Right cardiac atrium (tissue), 5 donors: ENCODE measurements at regions of chr4 and their contacts with region 1.

Region 1: GRCh38 chr4:119041951-119042560 is 93.6 kb upstream of the MYOZ2 start:
- DNase-seq: peak in 1 of 3 donors; percentile 34
- ATAC-seq: peak; percentile 72 to 77
- H3K4me3 ChIP-seq: no peak overlapping the region
- H3K27ac ChIP-seq: no peak overlapping the region
- H3K4me1 ChIP-seq: peaks cover 6% of the 10 kb centered on the region
- H3K27me3 ChIP-seq: no peaks in the 10 kb centered on the region

Region 2: DNA sequence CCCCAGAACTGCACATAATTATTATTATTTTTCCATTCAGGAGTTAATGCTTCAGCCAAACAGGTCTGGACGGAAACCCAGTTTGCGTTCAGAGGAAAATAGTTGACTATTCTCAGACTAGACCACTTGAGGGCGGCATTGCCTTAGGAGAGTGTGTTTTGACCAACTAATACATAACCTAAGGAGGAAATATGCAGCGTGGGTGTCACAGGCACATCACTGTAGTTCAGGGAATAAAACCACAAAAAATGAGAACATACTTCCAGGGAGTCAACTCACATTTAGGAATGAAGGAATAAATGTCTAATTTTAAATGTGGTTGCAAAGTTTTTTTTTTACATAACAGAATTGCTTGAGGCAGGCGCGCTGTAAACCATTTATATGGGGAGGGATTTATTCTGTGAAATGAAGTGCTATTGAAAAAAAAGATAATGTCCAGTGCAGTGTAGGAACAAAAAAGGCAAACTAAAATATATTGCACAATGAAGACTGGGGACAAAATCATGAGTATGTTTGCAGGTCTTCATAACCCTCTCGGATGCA is 60.1 kb before region 1 on chr4:
- intact Hi-C with region 1: no loop called
- DNase-seq: peak in 2 of 3 donors; percentile 41 to 55
- ATAC-seq: peak; percentile 74 to 83
- H3K4me3 ChIP-seq: no peak overlapping the region
- H3K27ac ChIP-seq: no peak overlapping the region
- H3K4me1 ChIP-seq: peaks cover 14% of the 10 kb centered on the region
- H3K27me3 ChIP-seq: no peaks in the 10 kb centered on the region

Region 3: GRCh38 chr4:119025916-119026661 is 16.0 kb before region 1 on chr4:
- intact Hi-C with region 1: no loop called
- DNase-seq: no peak
- ATAC-seq: peak; percentile 82 to 87
- H3K4me3 ChIP-seq: no peak overlapping the region
- H3K27ac ChIP-seq: peak overlapping the region; percentile 93
- H3K4me1 ChIP-seq: peaks cover 5% of the 10 kb centered on the region
- H3K27me3 ChIP-seq: no peaks in the 10 kb centered on the region

Region 4: DNA sequence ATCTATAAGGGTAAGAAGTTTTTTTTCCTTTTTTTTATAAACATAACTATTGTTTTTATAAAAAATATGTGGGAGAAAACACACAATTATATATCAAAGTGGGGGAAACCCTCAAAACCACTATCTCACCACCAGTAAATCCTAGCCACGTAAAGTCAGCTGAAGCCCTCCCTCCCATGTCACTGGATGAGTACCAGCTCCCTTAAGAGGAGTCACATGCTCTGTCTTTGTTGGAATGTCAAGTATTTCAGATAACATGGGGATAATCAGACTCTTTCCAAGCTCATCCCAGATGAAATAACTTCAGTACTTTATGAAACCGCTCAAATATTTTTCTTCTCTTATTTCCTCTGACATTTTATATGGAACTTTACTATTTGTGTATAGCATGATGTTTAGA is 96.0 kb after region 1 on chr4:
- intact Hi-C with region 1: loop called in 3 of 4 experiments (anchors 5 to 10 kb)
- DNase-seq: peak in 1 of 3 donors; percentile 46
- ATAC-seq: peak; percentile 74 to 76
- H3K4me3 ChIP-seq: peak overlapping the region; percentile 59
- H3K27ac ChIP-seq: no peak overlapping the region
- H3K4me1 ChIP-seq: peaks cover 2% of the 10 kb centered on the region
- H3K27me3 ChIP-seq: no peaks in the 10 kb centered on the region

Region 5: DNA sequence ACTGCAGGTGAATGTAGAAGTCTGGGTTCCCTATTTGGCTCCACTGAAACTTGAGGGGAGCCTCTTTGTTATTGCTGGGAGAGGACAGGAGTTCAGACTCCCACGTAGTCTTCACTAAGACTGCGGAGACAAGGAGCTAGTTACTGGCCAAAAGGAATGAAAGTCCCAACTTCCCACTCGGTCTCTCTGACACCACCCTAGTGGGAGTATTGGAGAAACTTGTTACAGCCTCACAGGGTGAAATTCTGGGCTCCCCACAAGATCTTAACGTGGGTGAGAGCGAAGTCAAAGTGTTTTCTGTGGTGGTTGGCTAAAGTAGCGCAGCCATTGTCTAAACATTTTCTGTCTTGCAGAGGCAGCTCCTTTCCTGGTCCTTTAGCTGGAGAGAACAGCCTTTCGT is 107.1 kb after region 1 on chr4:
- intact Hi-C with region 1: loop called in 3 of 4 experiments (anchors 5 to 10 kb)
- DNase-seq: no peak
- ATAC-seq: no peak
- H3K4me3 ChIP-seq: peak overlapping the region; percentile 17
- H3K27ac ChIP-seq: peak overlapping the region; percentile 65
- H3K4me1 ChIP-seq: no peaks in the 10 kb centered on the region
- H3K27me3 ChIP-seq: no peaks in the 10 kb centered on the region

Region 6: GRCh38 chr4:119286377-119287002 is 244.4 kb after region 1 on chr4:
- intact Hi-C with region 1: loop called in 2 of 4 experiments (anchors 5 to 10 kb)
- DNase-seq: peak in 1 of 3 donors; percentile 30
- ATAC-seq: peak in 1 of 2 donors; percentile 54
- H3K4me3 ChIP-seq: no peak overlapping the region
- H3K27ac ChIP-seq: no peak overlapping the region
- H3K4me1 ChIP-seq: no peaks in the 10 kb centered on the region
- H3K27me3 ChIP-seq: no peaks in the 10 kb centered on the region